ENCODE measurements at regions of chr10 and their contacts with region 1.

Region 1: GRCh38 chr10:35299016-35299415 is 37.3 kb upstream of the CCNY start:
- DNase-seq: no peak

Region 2: GRCh38 chr10:35251373-35252100 is 47.5 kb before region 1 on chr10:
- intact Hi-C with region 1: no loop called
- DNase-seq: no peak

Region 3: DNA sequence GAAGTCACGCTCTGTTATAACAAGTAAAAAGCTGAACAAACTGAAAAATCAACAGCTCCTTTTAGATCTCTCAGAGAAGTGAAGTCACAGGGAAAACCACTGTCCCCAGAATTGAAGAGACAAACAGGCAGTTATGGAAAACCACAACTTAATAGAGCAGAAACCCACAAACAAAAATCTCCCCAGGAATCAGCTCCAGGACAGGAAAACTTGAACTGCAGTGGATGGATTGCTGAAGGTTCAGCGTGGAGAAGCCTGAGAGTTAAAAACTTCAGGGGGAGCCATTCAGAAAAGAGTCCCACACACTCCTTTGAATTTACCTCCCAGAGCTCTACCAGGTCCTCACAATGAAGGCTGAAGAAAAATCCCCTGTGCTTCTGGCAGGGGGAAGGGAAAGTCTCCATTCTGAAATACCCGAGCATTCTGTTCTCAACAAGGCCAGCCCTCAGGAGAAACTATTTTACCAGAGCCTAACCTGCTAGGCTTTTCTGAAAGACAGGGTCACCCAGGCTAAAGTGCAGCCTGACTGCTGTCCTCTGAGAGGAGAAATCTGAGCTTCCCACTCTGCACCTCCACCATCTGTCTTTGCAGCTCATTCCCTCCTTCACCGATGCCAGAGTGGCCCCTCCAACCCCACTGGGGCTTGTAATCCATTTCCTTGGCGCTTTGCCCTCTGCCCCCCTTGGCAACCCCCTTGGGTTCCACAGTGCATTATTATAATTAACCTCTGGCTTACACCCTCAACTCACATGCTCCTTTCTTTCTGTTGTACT is 27.7 kb before region 1 on chr10:
- intact Hi-C with region 1: no loop called
- DNase-seq: no peak

Region 4: GRCh38 chr10:36739884-36740445 is 1440.9 kb after region 1 on chr10:
- intact Hi-C with region 1: loop called in 1 of 2 experiments (anchors 5 kb)
- DNase-seq: no peak

Measured in posterior vena cava (tissue), 2 donors.